ENCODE measurements at regions of chr6 and their contacts with region 1.

Region 1: GRCh38 chr6:143940011-143940597 is 68.0 kb downstream of the PLAGL1 start:
- DNase-seq: peak in 7 of 9 donors; percentile 44 to 69 (median 54)
- ATAC-seq: peak; percentile 96
- H3K4me3 ChIP-seq: no peak overlapping the region
- H3K4me3 Mint-ChIP-seq: no peak overlapping the region
- H3K27ac ChIP-seq: no peak overlapping the region
- H3K27ac Mint-ChIP-seq: no peak overlapping the region
- H3K4me1 ChIP-seq: no peaks in the 10 kb centered on the region
- H3K4me1 Mint-ChIP-seq: peaks cover 0 to 16% (median 6%) of the 10 kb centered on the region in 7 donors
- H3K27me3 ChIP-seq: no peaks in the 10 kb centered on the region
- H3K27me3 Mint-ChIP-seq: peaks cover 0 to 7% (median 0%) of the 10 kb centered on the region in 5 donors

Region 2: DNA sequence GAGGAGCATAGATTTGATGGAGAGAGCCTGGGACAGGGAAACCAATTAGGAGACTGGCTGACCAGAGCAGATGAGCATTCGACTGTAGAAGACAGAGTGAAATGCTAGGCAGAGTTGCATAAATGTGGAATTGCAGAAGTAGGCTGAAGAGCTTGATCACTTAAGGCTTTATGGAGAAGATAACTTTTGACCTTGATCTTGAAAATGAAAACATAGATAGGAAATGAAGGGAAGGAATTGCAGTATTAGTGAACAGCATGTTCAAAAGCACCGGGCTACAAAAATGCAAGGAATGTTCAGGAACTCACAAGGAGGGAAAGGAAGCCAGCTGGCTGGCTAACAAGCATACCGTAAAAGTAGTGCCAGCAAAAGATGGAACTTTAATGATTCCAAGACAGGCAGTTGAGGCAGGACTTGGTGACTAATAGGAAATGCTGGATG is 117.5 kb before region 1 on chr6:
- CTCF ChIA-PET with region 1: no interaction called
- POLR2A ChIA-PET with region 1: no interaction called
- intact Hi-C with region 1: no loop called
- DNase-seq: no peak
- ATAC-seq: no peak
- H3K4me3 ChIP-seq: no peak overlapping the region
- H3K4me3 Mint-ChIP-seq: no peak overlapping the region
- H3K27ac ChIP-seq: no peak overlapping the region
- H3K27ac Mint-ChIP-seq: no peak overlapping the region
- H3K4me1 ChIP-seq: no peaks in the 10 kb centered on the region
- H3K4me1 Mint-ChIP-seq: peaks cover 0 to 6% (median 0%) of the 10 kb centered on the region in 7 donors
- H3K27me3 ChIP-seq: no peaks in the 10 kb centered on the region
- H3K27me3 Mint-ChIP-seq: no peaks in the 10 kb centered on the region

Region 3: GRCh38 chr6:143878316-143878924 is 61.7 kb before region 1 on chr6:
- CTCF ChIA-PET with region 1: no interaction called
- POLR2A ChIA-PET with region 1: no interaction called
- intact Hi-C with region 1: no loop called
- DNase-seq: no peak
- ATAC-seq: no peak
- H3K4me3 ChIP-seq: no peak overlapping the region
- H3K4me3 Mint-ChIP-seq: peak overlapping the region in 1 of 10 donors; percentile 42
- H3K27ac ChIP-seq: no peak overlapping the region
- H3K27ac Mint-ChIP-seq: no peak overlapping the region
- H3K4me1 ChIP-seq: no peaks in the 10 kb centered on the region
- H3K4me1 Mint-ChIP-seq: peaks cover 0 to under 1% (median 0%) of the 10 kb centered on the region in 7 donors
- H3K27me3 ChIP-seq: no peaks in the 10 kb centered on the region
- H3K27me3 Mint-ChIP-seq: no peaks in the 10 kb centered on the region

Region 4: GRCh38 chr6:144013486-144013909 is 73.4 kb after region 1 on chr6:
- CTCF ChIA-PET with region 1: interaction called, 5 read pairs
- POLR2A ChIA-PET with region 1: no interaction called
- intact Hi-C with region 1: loop called (anchors 1 kb)
- DNase-seq: peak; percentile 18 to 58 (median 45)
- ATAC-seq: peak; percentile 54
- H3K4me3 ChIP-seq: no peak overlapping the region
- H3K4me3 Mint-ChIP-seq: no peak overlapping the region
- H3K27ac ChIP-seq: no peak overlapping the region
- H3K27ac Mint-ChIP-seq: peak overlapping the region in 1 of 9 donors; percentile 9
- H3K4me1 ChIP-seq: no peaks in the 10 kb centered on the region
- H3K4me1 Mint-ChIP-seq: peaks cover 0 to 4% (median 0%) of the 10 kb centered on the region in 7 donors
- H3K27me3 ChIP-seq: peaks cover 0 to 6% of the 10 kb centered on the region in 2 donors
- H3K27me3 Mint-ChIP-seq: peaks cover 11 to 45% (median 28%) of the 10 kb centered on the region in 5 donors

Region 5: GRCh38 chr6:144036064-144036834 is 96.1 kb after region 1 on chr6:
- CTCF ChIA-PET with region 1: interaction called, 4 read pairs
- POLR2A ChIA-PET with region 1: no interaction called
- intact Hi-C with region 1: loop called in 1 of 2 experiments (anchors 1 kb)
- DNase-seq: peak in 2 of 9 donors; percentile 14 to 39
- ATAC-seq: peak; percentile 73
- H3K4me3 ChIP-seq: no peak overlapping the region
- H3K4me3 Mint-ChIP-seq: peak overlapping the region; percentile 28 to 75 (median 53)
- H3K27ac ChIP-seq: no peak overlapping the region
- H3K27ac Mint-ChIP-seq: peak overlapping the region in 5 of 9 donors; percentile 15 to 39 (median 22)
- H3K4me1 ChIP-seq: peaks cover 0 to 10% of the 10 kb centered on the region in 2 donors
- H3K4me1 Mint-ChIP-seq: peaks cover 0 to 17% (median 13%) of the 10 kb centered on the region in 7 donors
- H3K27me3 ChIP-seq: no peaks in the 10 kb centered on the region
- H3K27me3 Mint-ChIP-seq: peaks cover 0 to 2% (median 0%) of the 10 kb centered on the region in 5 donors

Region 6: DNA sequence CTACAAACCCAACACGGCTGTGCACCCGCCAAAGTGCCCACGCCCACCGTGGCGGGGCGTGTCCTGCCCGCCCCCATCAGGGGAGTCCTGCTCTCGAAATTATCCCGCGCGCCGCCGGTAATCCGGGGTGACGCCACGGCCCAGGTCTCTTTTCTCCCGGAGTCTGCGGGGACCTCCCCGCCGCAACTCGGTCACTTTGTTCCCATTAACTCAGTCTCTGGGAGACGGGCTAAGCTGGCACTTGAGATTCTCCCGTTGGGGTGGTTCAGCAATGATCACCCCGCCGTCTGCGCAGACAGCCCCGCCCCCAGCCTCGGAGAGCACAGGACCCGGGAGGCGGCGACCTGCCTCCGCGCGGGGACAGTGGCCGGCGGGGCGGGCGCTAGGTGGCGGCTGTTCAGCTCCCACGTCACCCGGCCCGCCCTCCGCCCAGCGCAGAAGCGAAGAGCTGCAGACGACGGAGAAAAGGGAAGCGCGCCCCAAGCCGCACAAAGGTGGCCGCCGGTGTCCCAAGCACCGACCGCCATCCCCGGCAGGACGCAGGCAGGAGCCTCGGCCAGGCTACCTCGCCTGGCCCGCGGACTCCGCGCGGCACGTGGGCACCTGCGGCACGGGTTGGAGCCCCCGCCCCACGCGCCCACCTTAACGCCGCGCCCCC is 123.8 kb after region 1 on chr6:
- CTCF ChIA-PET with region 1: no interaction called
- POLR2A ChIA-PET with region 1: no interaction called
- intact Hi-C with region 1: loop called in 1 of 2 experiments (anchors 10 kb)
- DNase-seq: peak; percentile 84 to 91 (median 88)
- ATAC-seq: peak; percentile 96
- H3K4me3 ChIP-seq: peak overlapping the region; percentile 56
- H3K4me3 Mint-ChIP-seq: peak overlapping the region; percentile 87 to 94 (median 91)
- H3K27ac ChIP-seq: peak overlapping the region; percentile 85
- H3K27ac Mint-ChIP-seq: peak overlapping the region; percentile 83 to 97 (median 88)
- H3K4me1 ChIP-seq: peaks cover 0 to 12% of the 10 kb centered on the region in 2 donors
- H3K4me1 Mint-ChIP-seq: peaks cover 17 to 44% (median 29%) of the 10 kb centered on the region in 7 donors
- H3K27me3 ChIP-seq: no peaks in the 10 kb centered on the region
- H3K27me3 Mint-ChIP-seq: peaks cover 0 to 2% (median 0%) of the 10 kb centered on the region in 5 donors

Region 7: GRCh38 chr6:144090384-144090783 is 150.3 kb after region 1 on chr6:
- CTCF ChIA-PET with region 1: interaction called, 4 read pairs
- POLR2A ChIA-PET with region 1: interaction called, 3 read pairs
- intact Hi-C with region 1: loop called (anchors 1 kb)
- DNase-seq: no peak
- ATAC-seq: no peak
- H3K4me3 ChIP-seq: no peak overlapping the region
- H3K4me3 Mint-ChIP-seq: no peak overlapping the region
- H3K27ac ChIP-seq: no peak overlapping the region
- H3K27ac Mint-ChIP-seq: no peak overlapping the region
- H3K4me1 ChIP-seq: peaks cover 13 to 14% of the 10 kb centered on the region in 2 donors
- H3K4me1 Mint-ChIP-seq: peaks cover 15 to 27% (median 22%) of the 10 kb centered on the region in 7 donors
- H3K27me3 ChIP-seq: no peaks in the 10 kb centered on the region
- H3K27me3 Mint-ChIP-seq: peaks cover 0 to 1% (median 0%) of the 10 kb centered on the region in 5 donors

Region 8: DNA sequence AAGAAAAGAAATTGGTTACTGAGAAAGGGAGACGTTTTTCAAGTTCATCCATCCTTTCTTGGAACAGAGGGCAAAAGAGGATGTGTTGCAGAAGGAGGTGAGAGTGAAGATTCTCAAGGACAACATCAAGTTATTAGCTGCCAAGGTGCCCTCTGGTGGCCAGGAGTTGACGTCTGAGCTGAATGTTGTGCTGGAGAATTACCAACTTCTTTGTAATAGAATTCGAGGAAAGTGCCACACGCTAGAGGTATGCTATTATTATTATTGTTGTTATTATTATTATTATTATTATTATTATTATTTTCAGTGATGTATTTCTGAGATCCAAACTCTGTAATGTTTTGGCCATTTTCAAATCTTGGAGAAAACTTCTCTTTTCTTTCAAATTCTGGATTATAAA is 542.0 kb after region 1 on chr6:
- CTCF ChIA-PET with region 1: no interaction called
- POLR2A ChIA-PET with region 1: no interaction called
- intact Hi-C with region 1: loop called in 1 of 2 experiments (anchors 5 kb)
- DNase-seq: peak; percentile 27 to 67 (median 61)
- ATAC-seq: peak; percentile 77
- H3K4me3 ChIP-seq: no peak overlapping the region
- H3K4me3 Mint-ChIP-seq: no peak overlapping the region
- H3K27ac ChIP-seq: no peak overlapping the region
- H3K27ac Mint-ChIP-seq: peak overlapping the region in 6 of 9 donors; percentile 12 to 88 (median 38)
- H3K4me1 ChIP-seq: no peaks in the 10 kb centered on the region
- H3K4me1 Mint-ChIP-seq: peaks cover 0 to 20% (median 4%) of the 10 kb centered on the region in 7 donors
- H3K27me3 ChIP-seq: no peaks in the 10 kb centered on the region
- H3K27me3 Mint-ChIP-seq: no peaks in the 10 kb centered on the region